GM12878 (cell line): ENCODE measurements at regions of chr12 and their contacts with region 1.

Region 1: DNA sequence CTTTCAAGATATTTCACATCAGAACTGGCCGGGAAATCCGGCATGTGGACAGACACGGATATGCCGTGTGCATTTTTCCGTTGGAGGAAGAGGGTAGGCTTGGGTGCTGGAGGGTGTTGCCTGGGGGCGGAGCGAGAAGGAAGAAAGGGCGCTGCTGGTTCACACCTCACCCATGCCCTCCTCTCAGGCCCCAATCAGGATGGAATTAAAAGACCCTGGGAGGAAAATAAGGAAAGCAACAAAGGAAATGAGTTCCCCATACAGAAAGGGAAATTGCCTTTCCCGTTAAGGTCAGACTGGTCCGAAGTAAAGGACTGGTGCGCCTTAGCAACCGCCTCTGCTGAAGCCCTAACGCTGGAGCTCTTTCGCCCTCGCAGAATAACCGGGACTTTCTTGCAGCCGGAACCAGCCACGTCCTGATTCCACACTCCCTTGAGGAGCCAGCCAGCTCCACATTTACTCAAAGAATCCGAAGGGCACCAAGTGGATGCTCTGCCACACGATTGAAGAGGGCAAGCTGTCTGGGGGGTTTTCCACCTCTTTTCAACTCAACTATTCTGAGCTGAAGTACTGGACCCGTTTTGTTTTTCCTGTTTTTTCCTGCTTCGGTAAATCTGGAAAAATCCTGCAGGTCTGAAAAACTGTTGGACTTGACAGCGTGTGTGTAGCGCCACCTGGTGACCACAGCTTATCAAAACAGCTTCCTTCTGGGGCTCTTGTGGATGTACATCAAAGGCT is 37.7 kb upstream of the BCL2L14 start:
- DNase-seq: peak; percentile 66
- ATAC-seq: peak; percentile 68
- H3K4me3 ChIP-seq: peak overlapping the region; percentile 69
- H3K27ac ChIP-seq: peak overlapping the region; percentile 89
- H3K4me1 ChIP-seq: peaks cover 36% of the 10 kb centered on the region
- H3K27me3 ChIP-seq: no peaks in the 10 kb centered on the region
- CTCF ChIP-seq: peak; percentile 81 to 86 (median 82)
- EP300 ChIP-seq: peak in 1 of 2 experiments; percentile 21; a peak in 1 of 4 replicates
- POLR2A ChIP-seq: no peak
- RAD21 ChIP-seq: peak; percentile 96

Region 2: DNA sequence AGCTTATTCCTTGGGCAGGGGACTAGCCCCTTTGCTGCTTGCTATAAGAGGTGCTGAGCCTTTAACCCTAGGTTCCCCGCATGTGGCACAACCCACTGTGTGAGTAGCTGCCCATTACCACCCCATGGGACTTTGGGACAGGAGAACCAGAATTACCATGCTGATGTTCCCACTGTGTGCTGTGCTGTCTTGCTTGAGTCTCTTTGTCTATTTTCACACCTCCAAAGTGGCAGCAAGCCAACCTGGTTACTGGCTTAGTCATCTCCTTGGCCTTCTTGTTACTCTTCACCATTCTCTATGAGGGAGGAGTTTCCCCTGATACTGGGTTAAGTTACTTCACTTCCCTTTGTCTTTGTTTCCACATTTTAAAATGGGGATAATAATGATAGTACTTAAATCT is 456.9 kb before region 1 on chr12:
- CTCF ChIA-PET with region 1: interaction called, 278 read pairs
- POLR2A ChIA-PET with region 1: interaction called, 11 read pairs
- RAD21 ChIA-PET with region 1: interaction called, 201 read pairs
- SMC1A ChIA-PET with region 1: interaction called, 214 read pairs
- in situ Hi-C with region 1: loop called (anchors 5 kb)
- intact Hi-C with region 1: loop called (anchors 1 kb)
- DNase-seq: peak; percentile 86
- ATAC-seq: peak; percentile 53
- H3K4me3 ChIP-seq: no peak overlapping the region
- H3K27ac ChIP-seq: peak overlapping the region; percentile 89
- H3K4me1 ChIP-seq: peaks cover 43% of the 10 kb centered on the region
- H3K27me3 ChIP-seq: no peaks in the 10 kb centered on the region
- CTCF ChIP-seq: no peak
- EP300 ChIP-seq: no peak
- POLR2A ChIP-seq: no peak
- RAD21 ChIP-seq: no peak

Region 3: GRCh38 chr12:11658791-11659190 is 374.2 kb before region 1 on chr12:
- CTCF ChIA-PET with region 1: interaction called, 16 read pairs
- POLR2A ChIA-PET with region 1: no interaction called
- RAD21 ChIA-PET with region 1: interaction called, 12 read pairs
- SMC1A ChIA-PET with region 1: interaction called, 22 read pairs
- in situ Hi-C with region 1: loop called (anchors 5 kb)
- intact Hi-C with region 1: loop called (anchors 2 kb)
- DNase-seq: no peak
- ATAC-seq: no peak
- H3K4me3 ChIP-seq: no peak overlapping the region
- H3K27ac ChIP-seq: no peak overlapping the region
- H3K4me1 ChIP-seq: peaks cover 23% of the 10 kb centered on the region
- H3K27me3 ChIP-seq: no peaks in the 10 kb centered on the region
- CTCF ChIP-seq: no peak
- EP300 ChIP-seq: no peak
- POLR2A ChIP-seq: no peak
- RAD21 ChIP-seq: no peak

Region 4: GRCh38 chr12:11758510-11759493 is 274.2 kb before region 1 on chr12:
- CTCF ChIA-PET with region 1: interaction called, 17 read pairs
- POLR2A ChIA-PET with region 1: interaction called, 3 read pairs
- RAD21 ChIA-PET with region 1: interaction called, 25 read pairs
- SMC1A ChIA-PET with region 1: interaction called, 51 read pairs
- in situ Hi-C with region 1: no loop called
- intact Hi-C with region 1: loop called (anchors 2 kb)
- DNase-seq: peak; percentile 93
- ATAC-seq: peak; percentile 76
- H3K4me3 ChIP-seq: no peak overlapping the region; the same call in 1 of the 2 replicates
- H3K27ac ChIP-seq: peak overlapping the region; percentile 100
- H3K4me1 ChIP-seq: peaks cover 70% of the 10 kb centered on the region
- H3K27me3 ChIP-seq: no peaks in the 10 kb centered on the region
- CTCF ChIP-seq: no peak
- EP300 ChIP-seq: peak; percentile 78 to 91; a peak in 1 of 4 replicates
- POLR2A ChIP-seq: peak; percentile 63
- RAD21 ChIP-seq: peak; percentile 17; the same call in 1 of the 2 replicates

Region 5: GRCh38 chr12:11827091-11828061 is 205.6 kb before region 1 on chr12:
- CTCF ChIA-PET with region 1: interaction called, 35 read pairs
- POLR2A ChIA-PET with region 1: interaction called, 6 read pairs
- RAD21 ChIA-PET with region 1: interaction called, 34 read pairs
- SMC1A ChIA-PET with region 1: interaction called, 68 read pairs
- in situ Hi-C with region 1: no loop called
- intact Hi-C with region 1: no loop called
- DNase-seq: no peak
- ATAC-seq: no peak
- H3K4me3 ChIP-seq: no peak overlapping the region
- H3K27ac ChIP-seq: 0 out of 2 replicates have a peak overlapping the region, but pooled peaks have one; percentile 6
- H3K4me1 ChIP-seq: peaks cover 64% of the 10 kb centered on the region
- H3K27me3 ChIP-seq: no peaks in the 10 kb centered on the region
- CTCF ChIP-seq: no peak
- EP300 ChIP-seq: no peak
- POLR2A ChIP-seq: no peak
- RAD21 ChIP-seq: no peak

Region 6: DNA sequence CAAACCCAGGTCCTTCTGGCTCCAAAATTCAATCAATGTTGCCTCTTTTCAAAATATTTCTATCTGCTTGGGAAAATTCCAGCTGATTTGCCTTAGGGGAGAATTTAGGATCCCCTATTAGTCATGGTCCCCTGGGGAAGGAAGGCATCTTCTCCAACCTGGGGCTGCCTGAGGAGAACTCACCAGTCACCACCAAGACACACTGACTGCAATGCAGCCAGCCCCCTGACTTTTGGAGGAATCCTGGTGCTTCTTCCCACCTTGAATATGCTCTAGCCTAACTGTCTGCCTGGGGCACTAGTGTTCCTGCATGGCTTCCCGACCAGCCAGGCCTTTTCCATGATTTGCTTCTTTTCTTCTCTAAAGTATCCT is 34.1 kb before region 1 on chr12:
- CTCF ChIA-PET with region 1: interaction called, 11 read pairs
- POLR2A ChIA-PET with region 1: interaction called, 6 read pairs
- RAD21 ChIA-PET with region 1: interaction called, 4 read pairs
- SMC1A ChIA-PET with region 1: interaction called, 6 read pairs
- in situ Hi-C with region 1: no loop called
- intact Hi-C with region 1: no loop called
- DNase-seq: no peak
- ATAC-seq: no peak
- H3K4me3 ChIP-seq: no peak overlapping the region
- H3K27ac ChIP-seq: no peak overlapping the region
- H3K4me1 ChIP-seq: no peaks in the 10 kb centered on the region
- H3K27me3 ChIP-seq: no peaks in the 10 kb centered on the region
- CTCF ChIP-seq: no peak
- EP300 ChIP-seq: no peak
- POLR2A ChIP-seq: no peak
- RAD21 ChIP-seq: no peak